AG04450 (cell line): ENCODE measurements at regions of chr19 and their contacts with region 1.

Region 1: GRCh38 chr19:8580710-8581281 is 3.6 kb upstream of the MYO1F start:
- DNase-seq: no peak
- H3K4me3 ChIP-seq: no peak overlapping the region
- H3K27ac ChIP-seq: no peak overlapping the region
- H3K27me3 ChIP-seq: peaks cover 4% of the 10 kb centered on the region
- CTCF ChIP-seq: peak; percentile 98

Region 2: DNA sequence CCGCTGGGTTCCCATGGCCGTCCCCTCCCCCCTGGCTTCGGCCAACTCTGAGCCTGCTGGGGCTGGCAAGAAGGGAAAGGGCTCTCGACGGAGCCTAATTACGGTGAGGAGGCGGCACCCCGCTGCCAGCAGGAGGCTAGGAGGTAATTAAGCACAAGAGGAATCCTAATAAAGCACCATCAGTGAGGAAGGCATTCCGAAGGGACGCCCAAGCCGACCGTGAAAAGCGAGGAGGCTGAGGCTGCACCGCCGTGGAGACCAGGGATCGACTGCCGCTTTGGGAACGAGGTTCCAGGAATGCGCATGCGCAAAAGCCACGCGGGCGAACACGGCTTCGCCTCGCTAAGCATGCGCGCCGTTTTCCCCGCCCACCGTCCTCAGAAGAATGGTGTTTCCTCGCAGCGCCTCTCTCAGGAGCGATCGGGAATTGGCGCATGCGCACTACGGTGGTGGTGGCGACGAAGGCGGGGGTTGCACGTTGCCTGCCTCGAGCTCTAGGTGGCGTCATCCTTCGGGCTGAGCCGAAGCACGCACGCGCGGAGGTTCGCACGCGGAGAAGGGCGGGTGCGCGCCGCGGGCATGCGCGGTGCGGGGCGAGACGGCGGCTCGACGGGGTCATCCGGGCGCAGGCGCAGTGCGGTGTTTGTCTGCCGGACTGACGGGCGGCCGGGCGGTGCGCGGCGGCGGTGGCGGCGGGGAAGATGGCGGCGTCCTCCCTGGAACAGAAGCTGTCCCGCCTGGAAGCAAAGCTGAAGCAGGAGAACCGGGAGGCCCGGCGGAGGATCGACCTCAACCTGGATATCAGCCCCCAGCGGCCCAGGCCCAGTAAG is 677.3 kb before region 1 on chr19 and contains the start of gene MAP2K7:
- CTCF ChIA-PET with region 1: no interaction called
- POLR2A ChIA-PET with region 1: no interaction called
- DNase-seq: peak; percentile 98
- H3K4me3 ChIP-seq: peak within 1 kb of the TSS; percentile 83
- H3K27ac ChIP-seq: peak within 1 kb of the TSS; percentile 61
- H3K27me3 ChIP-seq: no peaks in the 10 kb centered on the region
- CTCF ChIP-seq: peak; percentile 43
- polyA plus RNA-seq, gene MAP2K7: 5.6 and 6.2 TPM in 2 replicates

Region 3: DNA sequence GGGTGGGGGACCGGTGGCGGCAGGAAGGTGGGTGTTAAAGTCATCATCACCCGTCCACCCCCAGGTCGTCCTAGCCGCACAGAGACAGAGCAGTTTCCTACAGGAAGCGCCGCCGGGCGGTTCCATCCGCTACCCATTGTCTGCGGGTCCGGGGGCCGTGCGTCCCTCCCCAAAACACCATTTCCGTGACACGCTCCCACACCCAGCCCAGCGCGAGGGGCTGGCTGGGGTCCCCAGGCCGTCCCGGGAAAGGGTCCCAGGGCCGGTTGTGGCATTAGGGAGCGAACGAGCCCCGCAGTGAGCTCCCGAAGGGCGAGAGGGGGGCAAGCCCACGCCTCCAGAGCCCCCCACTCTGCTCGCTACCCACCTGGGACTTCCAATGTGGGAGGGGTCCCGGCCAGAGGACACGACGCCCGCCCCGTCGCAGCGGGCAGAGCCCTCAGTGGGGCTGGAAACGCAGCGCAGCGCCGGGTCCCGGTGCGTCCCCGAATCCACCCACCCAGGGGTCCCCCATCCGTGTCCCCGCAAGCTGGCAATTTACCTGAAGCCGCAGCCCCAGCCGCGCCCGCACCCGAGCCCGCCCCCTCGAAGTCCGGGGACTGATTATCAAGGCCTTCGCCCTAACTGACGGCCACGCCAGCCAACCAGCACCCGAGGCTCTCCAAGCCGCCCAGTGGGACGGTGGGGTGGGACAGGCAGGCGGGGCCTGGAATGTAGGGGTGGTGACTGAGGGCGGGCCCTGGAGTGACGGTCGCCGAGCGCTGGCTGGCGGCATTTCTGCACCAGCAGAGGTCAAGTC is 237.9 kb before region 1 on chr19 and contains the start of gene KANK3:
- CTCF ChIA-PET with region 1: interaction called, 10 read pairs
- POLR2A ChIA-PET with region 1: no interaction called
- DNase-seq: peak; percentile 73
- H3K4me3 ChIP-seq: peak within 1 kb of the TSS; percentile 31; the same call in 1 of the 2 replicates
- H3K27ac ChIP-seq: no peak within 1 kb of the TSS
- H3K27me3 ChIP-seq: peaks cover 23% of the 10 kb centered on the region
- CTCF ChIP-seq: no peak
- polyA plus RNA-seq, gene KANK3: 0.07 TPM in 1 of 2 replicates, not detected in the other

Region 4: DNA sequence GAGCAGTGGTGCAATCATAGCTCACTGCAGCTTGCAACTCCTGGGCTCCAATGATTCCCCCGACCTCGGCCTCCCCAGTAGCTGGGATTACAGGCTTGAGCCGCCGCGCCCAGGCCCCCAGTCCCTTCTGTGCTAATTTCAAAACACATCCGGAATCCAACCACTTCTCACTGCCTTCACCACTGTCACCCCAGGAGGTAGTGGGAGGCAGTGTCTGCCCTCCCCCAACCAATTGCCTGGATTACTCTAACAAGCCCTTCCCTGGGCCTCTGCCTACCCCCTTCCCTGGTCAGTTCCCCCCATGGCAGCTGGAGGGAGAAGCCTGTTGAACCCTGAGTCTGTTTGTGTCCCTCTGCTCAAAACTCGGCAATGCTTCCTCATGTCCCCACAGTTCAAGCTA is 80.6 kb before region 1 on chr19:
- CTCF ChIA-PET with region 1: interaction called, 13 read pairs
- POLR2A ChIA-PET with region 1: no interaction called
- DNase-seq: no peak
- H3K4me3 ChIP-seq: no peak overlapping the region
- H3K27ac ChIP-seq: no peak overlapping the region
- H3K27me3 ChIP-seq: no peaks in the 10 kb centered on the region
- CTCF ChIP-seq: no peak

Region 5: DNA sequence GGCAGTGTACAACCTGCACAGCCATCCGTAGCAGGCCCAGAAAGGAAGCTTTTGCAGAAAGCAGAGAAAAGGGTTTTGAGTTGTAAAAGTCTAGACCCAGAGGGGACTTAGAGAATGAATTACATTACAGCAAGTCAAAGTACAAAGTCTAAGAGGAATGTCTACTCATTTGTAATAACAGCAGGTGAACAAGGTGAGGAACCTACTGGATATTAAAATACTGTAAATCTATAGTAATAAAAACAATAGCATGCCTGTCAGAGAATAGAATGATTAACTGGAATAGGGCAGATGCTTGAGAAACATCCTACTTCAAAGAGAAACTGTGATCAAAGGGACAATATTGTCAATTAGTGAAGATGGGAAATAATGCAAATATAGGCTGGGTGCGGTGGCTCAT is 48.6 kb before region 1 on chr19:
- CTCF ChIA-PET with region 1: interaction called, 11 read pairs
- POLR2A ChIA-PET with region 1: no interaction called
- DNase-seq: no peak
- H3K4me3 ChIP-seq: no peak overlapping the region
- H3K27ac ChIP-seq: no peak overlapping the region
- H3K27me3 ChIP-seq: no peaks in the 10 kb centered on the region
- CTCF ChIP-seq: no peak

Region 6: GRCh38 chr19:8592231-8593009 is 11.6 kb after region 1 on chr19:
- CTCF ChIA-PET with region 1: interaction called, 88 read pairs
- POLR2A ChIA-PET with region 1: interaction called, 3 read pairs
- DNase-seq: peak; percentile 90
- H3K4me3 ChIP-seq: peak overlapping the region; percentile 53
- H3K27ac ChIP-seq: no peak overlapping the region
- H3K27me3 ChIP-seq: peaks cover 11% of the 10 kb centered on the region
- CTCF ChIP-seq: no peak

Region 7: GRCh38 chr19:8641908-8642547 is 61.2 kb after region 1 on chr19:
- CTCF ChIA-PET with region 1: interaction called, 35 read pairs
- POLR2A ChIA-PET with region 1: interaction called, 6 read pairs
- DNase-seq: no peak
- H3K4me3 ChIP-seq: no peak overlapping the region
- H3K27ac ChIP-seq: no peak overlapping the region
- H3K27me3 ChIP-seq: no peaks in the 10 kb centered on the region
- CTCF ChIP-seq: peak; percentile 64

Region 8: DNA sequence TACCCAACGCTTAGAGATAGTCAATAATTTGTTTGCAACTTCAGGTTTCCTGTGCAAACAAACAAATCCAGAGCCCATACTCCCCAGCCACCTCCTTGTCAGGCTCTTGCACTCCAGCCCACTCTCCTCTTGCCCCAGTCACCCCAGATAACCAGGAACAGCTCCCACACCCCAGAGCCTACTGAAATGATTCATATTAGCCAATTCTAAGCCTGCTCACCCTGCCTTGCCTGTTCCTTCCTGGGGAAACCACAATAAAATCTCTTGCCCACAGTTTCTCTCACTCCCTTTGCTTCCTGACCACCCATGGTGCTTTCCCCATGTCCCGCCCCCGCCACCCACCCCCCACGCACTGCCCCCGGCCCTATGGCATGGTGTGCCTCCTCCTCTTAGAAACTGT is 121.6 kb after region 1 on chr19:
- CTCF ChIA-PET with region 1: no interaction called
- POLR2A ChIA-PET with region 1: no interaction called
- DNase-seq: no peak
- H3K4me3 ChIP-seq: no peak overlapping the region
- H3K27ac ChIP-seq: no peak overlapping the region
- H3K27me3 ChIP-seq: no peaks in the 10 kb centered on the region
- CTCF ChIP-seq: no peak